Activated B cell treated with CpG ODN at 0.5 μM for 24 hours (primary cell): ENCODE measurements at regions of chr3 and their contacts with region 1.

Region 1: DNA sequence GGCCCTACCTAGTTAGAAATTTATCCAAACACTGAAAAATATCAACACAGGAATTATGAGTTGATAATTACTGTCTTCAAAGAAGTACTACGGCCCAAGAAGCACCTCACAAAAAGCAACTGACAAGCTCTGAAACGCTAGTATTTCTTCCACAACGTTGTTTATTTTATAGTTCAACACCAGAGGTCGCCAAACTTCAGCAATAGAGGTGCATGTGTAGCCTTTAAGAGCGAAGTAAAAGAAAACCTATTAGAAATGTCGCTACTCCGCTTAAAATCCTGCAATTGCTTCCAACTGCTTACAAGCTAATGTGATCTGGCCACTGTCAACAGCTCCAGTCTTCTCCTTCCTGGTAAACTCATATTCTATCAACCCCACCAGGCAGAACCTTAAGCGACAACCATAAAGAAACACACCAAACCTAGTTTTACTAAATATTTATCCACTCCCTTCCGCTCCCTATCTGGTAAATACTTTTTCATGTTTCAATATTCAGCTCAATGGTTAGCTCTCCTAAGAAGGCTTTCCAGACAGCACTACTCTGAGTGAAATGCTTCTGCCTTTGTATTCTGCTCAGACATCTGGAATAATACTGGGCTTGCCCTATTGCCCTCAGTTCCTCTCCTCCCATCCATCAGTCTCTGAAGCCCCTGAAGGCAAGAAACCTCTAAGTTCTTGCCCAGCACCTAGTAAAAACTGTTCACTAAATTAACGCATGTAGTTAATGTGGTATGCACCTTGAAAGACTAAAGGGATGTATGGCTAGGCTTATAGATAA is 110.2 kb downstream of the NR1I2 start:
- DNase-seq: no peak
- ATAC-seq: no peak
- H3K4me3 Mint-ChIP-seq: no peak overlapping the region
- H3K27ac Mint-ChIP-seq: no peak overlapping the region
- H3K4me1 Mint-ChIP-seq: peaks cover 6% of the 10 kb centered on the region
- H3K27me3 Mint-ChIP-seq: no peaks in the 10 kb centered on the region
- CTCF ChIP-seq: peak; percentile 22

Region 2: GRCh38 chr3:118884748-118885206 is 1007.4 kb before region 1 on chr3:
- CTCF ChIA-PET with region 1: no interaction called
- POLR2A ChIA-PET with region 1: no interaction called
- intact Hi-C with region 1: loop called (anchors 10 kb)
- DNase-seq: peak; percentile 44
- ATAC-seq: peak; percentile 75
- H3K4me3 Mint-ChIP-seq: no peak overlapping the region
- H3K27ac Mint-ChIP-seq: no peak overlapping the region
- H3K4me1 Mint-ChIP-seq: no peaks in the 10 kb centered on the region
- H3K27me3 Mint-ChIP-seq: peaks cover 20% of the 10 kb centered on the region
- CTCF ChIP-seq: peak; percentile 74

Region 3: DNA sequence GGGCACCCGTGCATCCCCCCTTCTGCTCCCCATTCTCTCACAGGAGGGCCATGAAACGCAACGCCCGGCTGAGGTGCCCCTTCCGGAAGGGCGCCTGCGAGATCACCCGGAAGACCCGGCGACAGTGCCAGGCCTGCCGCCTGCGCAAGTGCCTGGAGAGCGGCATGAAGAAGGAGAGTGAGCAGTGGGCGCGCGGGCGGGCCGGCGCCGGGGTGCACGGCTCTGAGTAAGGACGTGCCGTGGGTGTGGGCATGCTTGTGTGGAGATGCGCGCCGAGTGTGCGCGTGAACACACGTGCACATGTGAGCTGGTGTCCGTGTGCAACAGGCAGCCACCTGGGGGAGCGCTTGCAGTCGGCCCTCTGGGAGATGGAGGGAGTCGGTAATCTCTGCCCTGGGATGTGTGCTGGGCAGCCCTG is 82.1 kb before region 1 on chr3:
- CTCF ChIA-PET with region 1: no interaction called
- POLR2A ChIA-PET with region 1: no interaction called
- intact Hi-C with region 1: no loop called
- DNase-seq: peak; percentile 51
- ATAC-seq: peak; percentile 85
- H3K4me3 Mint-ChIP-seq: peak overlapping the region; percentile 90
- H3K27ac Mint-ChIP-seq: peak overlapping the region; percentile 75
- H3K4me1 Mint-ChIP-seq: peaks cover 9% of the 10 kb centered on the region
- H3K27me3 Mint-ChIP-seq: no peaks in the 10 kb centered on the region
- CTCF ChIP-seq: no peak

Region 4: DNA sequence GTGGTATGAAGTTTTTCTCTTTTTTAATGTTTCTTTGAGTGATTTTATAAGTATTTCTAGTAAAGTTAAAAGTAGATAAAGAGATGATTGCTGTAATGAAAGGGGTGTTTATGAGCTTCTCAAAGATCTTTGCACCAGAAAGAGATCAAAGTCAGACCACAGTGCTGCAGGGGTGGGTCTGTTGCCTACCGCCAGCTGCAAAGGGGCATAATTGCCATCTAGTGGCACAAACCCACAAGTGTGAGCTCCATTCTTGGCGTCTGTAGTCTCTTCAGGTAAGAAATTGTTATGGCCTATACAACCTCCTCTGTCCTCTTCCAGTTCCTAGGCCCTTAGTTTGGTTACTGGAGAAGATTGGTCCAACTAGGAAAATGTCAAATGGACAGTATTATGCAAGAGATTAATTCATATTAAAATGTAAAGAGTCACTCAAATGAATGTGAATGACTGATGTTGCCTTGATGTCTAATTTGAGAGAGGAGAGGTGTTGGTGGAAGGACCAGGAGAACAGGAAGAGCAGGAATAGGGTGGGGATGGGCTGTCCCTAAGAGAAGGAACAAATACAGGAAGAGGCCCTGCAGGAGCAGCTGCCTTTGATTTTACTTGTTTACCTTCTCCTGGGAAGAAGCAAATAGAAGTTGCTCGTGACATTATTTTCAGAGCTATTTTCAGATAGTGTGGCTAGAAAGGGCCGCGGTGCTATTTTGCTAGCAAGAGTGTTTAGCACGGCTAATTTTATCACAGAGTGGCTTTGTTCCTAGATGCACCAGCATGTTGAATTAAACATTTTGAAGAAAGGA is 255.1 kb after region 1 on chr3:
- CTCF ChIA-PET with region 1: interaction called, 117 read pairs
- POLR2A ChIA-PET with region 1: interaction called, 4 read pairs
- intact Hi-C with region 1: loop called (anchors 1 kb)
- DNase-seq: no peak
- ATAC-seq: peak; percentile 56
- H3K4me3 Mint-ChIP-seq: no peak overlapping the region
- H3K27ac Mint-ChIP-seq: no peak overlapping the region
- H3K4me1 Mint-ChIP-seq: no peaks in the 10 kb centered on the region
- H3K27me3 Mint-ChIP-seq: no peaks in the 10 kb centered on the region
- CTCF ChIP-seq: no peak

Region 5: DNA sequence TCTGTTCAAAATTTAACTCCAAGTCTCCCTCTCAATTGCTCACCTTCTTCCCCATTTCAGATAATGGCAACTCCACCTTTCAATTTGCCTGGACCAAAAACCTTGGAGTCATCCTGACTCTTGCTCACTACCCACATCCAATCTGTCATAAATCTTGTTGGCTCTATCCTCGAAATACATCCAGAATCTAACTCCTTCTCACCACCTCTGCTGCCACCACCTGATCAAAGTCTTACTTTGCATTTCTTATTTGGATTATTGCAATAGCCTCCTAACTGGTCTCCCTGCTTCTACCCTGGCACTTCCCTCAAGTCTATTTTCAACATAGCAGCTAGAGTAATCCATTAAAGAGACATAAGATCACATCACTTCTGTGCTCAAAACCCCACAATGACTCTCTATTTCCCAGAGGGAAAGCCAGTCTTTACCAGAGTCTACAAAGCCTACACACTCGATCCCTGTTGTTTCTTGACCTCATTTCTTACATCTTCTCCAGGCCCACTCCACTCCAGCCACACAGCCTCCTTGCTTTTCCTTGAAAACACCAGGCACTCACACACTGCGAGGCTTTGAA is 306.3 kb after region 1 on chr3:
- CTCF ChIA-PET with region 1: interaction called, 15 read pairs
- POLR2A ChIA-PET with region 1: no interaction called
- intact Hi-C with region 1: loop called (anchors 1 kb)
- DNase-seq: no peak
- ATAC-seq: no peak
- H3K4me3 Mint-ChIP-seq: no peak overlapping the region
- H3K27ac Mint-ChIP-seq: no peak overlapping the region
- H3K4me1 Mint-ChIP-seq: no peaks in the 10 kb centered on the region
- H3K27me3 Mint-ChIP-seq: no peaks in the 10 kb centered on the region
- CTCF ChIP-seq: no peak

Region 6: GRCh38 chr3:120417272-120417911 is 525.3 kb after region 1 on chr3:
- CTCF ChIA-PET with region 1: interaction called, 9 read pairs
- POLR2A ChIA-PET with region 1: no interaction called
- intact Hi-C with region 1: loop called (anchors 1 kb)
- DNase-seq: peak; percentile 61
- ATAC-seq: peak; percentile 100
- H3K4me3 Mint-ChIP-seq: peak overlapping the region; percentile 83
- H3K27ac Mint-ChIP-seq: peak overlapping the region; percentile 37
- H3K4me1 Mint-ChIP-seq: peaks cover 16% of the 10 kb centered on the region
- H3K27me3 Mint-ChIP-seq: no peaks in the 10 kb centered on the region
- CTCF ChIP-seq: no peak

Region 7: DNA sequence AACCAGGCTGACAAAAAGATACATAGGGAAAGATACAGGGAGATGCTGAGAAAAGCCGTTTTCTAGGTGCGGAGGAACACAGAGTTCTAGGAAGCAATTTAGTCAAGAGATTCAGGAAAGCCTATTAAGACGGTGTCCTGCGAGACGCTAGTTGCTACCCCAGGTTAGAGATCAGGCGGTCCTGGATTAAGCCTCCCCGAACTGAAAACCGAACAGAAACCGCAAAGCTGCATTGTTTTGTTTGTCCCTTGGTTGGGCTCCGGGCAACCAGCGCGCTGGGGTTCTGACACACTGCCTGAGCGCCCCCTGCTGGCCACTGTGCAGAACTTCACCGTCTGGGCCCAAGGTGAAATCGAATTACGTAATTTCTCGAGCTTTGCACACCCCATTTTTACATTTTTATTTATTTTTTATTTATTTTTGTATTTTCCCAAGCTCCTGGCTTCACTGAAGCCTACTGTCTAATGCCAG is 666.7 kb after region 1 on chr3:
- CTCF ChIA-PET with region 1: interaction called, 8 read pairs
- POLR2A ChIA-PET with region 1: no interaction called
- intact Hi-C with region 1: loop called (anchors 1 kb)
- DNase-seq: peak; percentile 74
- ATAC-seq: peak; percentile 86
- H3K4me3 Mint-ChIP-seq: peak overlapping the region; percentile 79
- H3K27ac Mint-ChIP-seq: peak overlapping the region; percentile 67
- H3K4me1 Mint-ChIP-seq: peaks cover 14% of the 10 kb centered on the region
- H3K27me3 Mint-ChIP-seq: peaks cover 18% of the 10 kb centered on the region
- CTCF ChIP-seq: peak; percentile 84